Naive thymus-derived CD4-positive, alpha-beta T cell (primary cell): ENCODE measurements at regions of chr12 and their contacts with region 1.

Region 1: GRCh38 chr12:94459728-94460615 is at the start of gene CEP83:
- DNase-seq: peak; percentile 89 to 97 (median 94)
- ATAC-seq: peak; percentile 99
- H3K4me3 ChIP-seq: peak within 1 kb of the TSS; percentile 68
- H3K4me3 Mint-ChIP-seq: peak within 1 kb of the TSS; percentile 92 to 98 (median 96)
- H3K27ac ChIP-seq: peak within 1 kb of the TSS; percentile 91
- H3K27ac Mint-ChIP-seq: peak within 1 kb of the TSS; percentile 70 to 97 (median 94)
- H3K4me1 ChIP-seq: peaks cover 3 to 13% of the 10 kb centered on the region in 2 donors
- H3K4me1 Mint-ChIP-seq: peaks cover 10 to 38% (median 30%) of the 10 kb centered on the region in 7 donors
- H3K27me3 ChIP-seq: no peaks in the 10 kb centered on the region
- H3K27me3 Mint-ChIP-seq: peaks cover 0 to 12% (median 6%) of the 10 kb centered on the region in 5 donors
- total RNA-seq, gene CEP83: 12.8 to 22.7 (median 16.8) TPM

Region 2: GRCh38 chr12:92928962-92929915 is 1530.7 kb before region 1 on chr12 and contains the start of gene EEA1:
- CTCF ChIA-PET with region 1: no interaction called
- POLR2A ChIA-PET with region 1: no interaction called
- intact Hi-C with region 1: loop called in 1 of 2 experiments (anchors 1 kb)
- DNase-seq: peak; percentile 89 to 96 (median 91)
- ATAC-seq: peak; percentile 93
- H3K4me3 ChIP-seq: peak within 1 kb of the TSS; percentile 71
- H3K4me3 Mint-ChIP-seq: peak within 1 kb of the TSS; percentile 75 to 94 (median 91)
- H3K27ac ChIP-seq: peak within 1 kb of the TSS; percentile 96
- H3K27ac Mint-ChIP-seq: peak within 1 kb of the TSS; percentile 89 to 99 (median 93)
- H3K4me1 ChIP-seq: peaks cover 19 to 23% of the 10 kb centered on the region in 2 donors
- H3K4me1 Mint-ChIP-seq: peaks cover 20 to 53% (median 37%) of the 10 kb centered on the region in 7 donors
- H3K27me3 ChIP-seq: no peaks in the 10 kb centered on the region
- H3K27me3 Mint-ChIP-seq: peaks cover 0 to 6% (median 0%) of the 10 kb centered on the region in 5 donors
- total RNA-seq, gene EEA1: 20.9 to 28.3 (median 27.9) TPM

Region 3: DNA sequence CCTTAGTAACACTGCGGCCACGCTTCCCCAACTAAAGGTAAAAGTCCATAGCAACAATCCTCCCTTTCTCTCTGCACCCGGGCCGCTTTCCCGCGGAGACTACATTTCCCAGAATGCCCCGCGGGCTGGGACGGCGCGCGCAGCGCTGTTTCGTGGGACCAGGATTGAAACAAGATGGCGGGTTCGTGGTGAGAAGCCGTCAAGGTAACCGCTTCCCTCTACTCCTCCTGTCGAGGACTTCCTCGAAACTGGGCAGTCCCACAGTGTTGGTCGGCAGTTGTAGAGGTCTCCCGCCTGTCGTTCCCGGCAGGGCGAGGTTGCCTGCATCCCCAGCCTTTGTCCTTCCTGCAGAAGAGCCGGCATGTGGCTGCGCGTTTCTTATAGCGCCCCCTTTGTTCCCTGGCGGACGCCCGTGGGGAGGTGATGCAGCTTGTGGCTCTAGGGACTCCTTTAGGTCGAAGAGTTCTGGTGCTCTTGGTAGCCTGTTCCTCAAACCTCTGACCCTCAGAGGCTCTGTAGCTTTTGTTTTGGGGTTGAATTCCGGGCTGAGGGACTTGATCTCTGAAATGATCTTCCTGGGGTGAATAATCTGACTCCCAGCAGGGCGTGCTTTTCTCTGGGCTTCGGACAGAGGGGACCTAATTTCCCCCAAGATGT is 992.5 kb before region 1 on chr12 and contains the start of gene MRPL42:
- CTCF ChIA-PET with region 1: no interaction called
- POLR2A ChIA-PET with region 1: no interaction called
- intact Hi-C with region 1: loop called in 1 of 2 experiments (anchors 5 kb)
- DNase-seq: peak; percentile 86 to 96 (median 94)
- ATAC-seq: peak; percentile 97
- H3K4me3 ChIP-seq: peak within 1 kb of the TSS; percentile 94
- H3K4me3 Mint-ChIP-seq: peak within 1 kb of the TSS; percentile 85 to 96 (median 93)
- H3K27ac ChIP-seq: peak within 1 kb of the TSS; percentile 85
- H3K27ac Mint-ChIP-seq: peak within 1 kb of the TSS; percentile 90 to 98 (median 95)
- H3K4me1 ChIP-seq: peaks cover 8 to 10% of the 10 kb centered on the region in 2 donors
- H3K4me1 Mint-ChIP-seq: peaks cover 28 to 48% (median 36%) of the 10 kb centered on the region in 7 donors
- H3K27me3 ChIP-seq: no peaks in the 10 kb centered on the region
- H3K27me3 Mint-ChIP-seq: no peaks in the 10 kb centered on the region
- total RNA-seq, gene MRPL42: 30.1 to 65.8 (median 45.6) TPM

Region 4: GRCh38 chr12:93979189-93979588 is 480.8 kb before region 1 on chr12:
- CTCF ChIA-PET with region 1: no interaction called
- POLR2A ChIA-PET with region 1: no interaction called
- intact Hi-C with region 1: no loop called
- DNase-seq: peak in 4 of 9 donors; percentile 21 to 51 (median 31)
- ATAC-seq: peak; percentile 27
- H3K4me3 ChIP-seq: no peak overlapping the region
- H3K4me3 Mint-ChIP-seq: no peak overlapping the region
- H3K27ac ChIP-seq: no peak overlapping the region
- H3K27ac Mint-ChIP-seq: peak overlapping the region in 1 of 9 donors; percentile 27
- H3K4me1 ChIP-seq: no peaks in the 10 kb centered on the region
- H3K4me1 Mint-ChIP-seq: peaks cover 13 to 48% (median 30%) of the 10 kb centered on the region in 7 donors
- H3K27me3 ChIP-seq: no peaks in the 10 kb centered on the region
- H3K27me3 Mint-ChIP-seq: peaks cover 0 to 6% (median 0%) of the 10 kb centered on the region in 5 donors

Region 5: DNA sequence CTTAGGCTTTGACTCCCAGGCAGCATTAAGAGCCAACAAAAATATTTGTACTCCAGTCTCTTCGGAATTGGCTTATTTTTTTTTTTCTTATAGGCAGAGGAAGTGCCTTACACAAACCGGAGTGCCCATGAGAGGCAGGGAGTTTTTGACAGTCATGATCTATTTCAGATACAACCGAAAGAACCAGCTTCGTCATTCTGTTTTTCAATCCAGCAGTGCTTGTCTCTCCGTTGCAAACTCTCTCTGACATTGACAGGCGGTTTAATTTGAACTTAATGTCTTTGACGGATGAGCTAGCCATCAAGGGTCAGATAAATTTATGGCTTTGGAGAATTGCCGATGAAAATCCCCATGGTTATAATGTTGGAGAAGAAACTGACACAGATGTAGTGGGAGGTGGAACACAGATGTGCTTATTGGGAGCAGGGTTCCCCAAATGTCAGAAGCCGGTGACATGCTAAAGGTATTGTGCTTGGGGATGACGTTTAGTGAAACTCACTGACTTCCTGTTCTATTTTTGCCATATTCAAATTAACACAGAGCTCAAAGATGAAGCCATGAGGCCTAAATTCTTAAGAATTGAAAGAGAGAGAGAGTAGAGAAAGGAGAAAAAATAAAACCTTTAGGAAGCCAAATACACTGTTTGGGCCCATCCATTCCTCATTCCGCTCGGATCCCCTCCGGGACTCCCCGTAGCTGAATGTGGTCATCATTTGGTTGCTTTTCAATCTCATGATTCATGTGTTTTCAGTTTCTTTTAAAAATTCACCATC is 251.9 kb before region 1 on chr12:
- CTCF ChIA-PET with region 1: no interaction called
- POLR2A ChIA-PET with region 1: no interaction called
- intact Hi-C with region 1: loop called (anchors 1 kb)
- DNase-seq: peak in 8 of 9 donors; percentile 24 to 55 (median 48)
- ATAC-seq: peak; percentile 86
- H3K4me3 ChIP-seq: peak overlapping the region; percentile 58
- H3K4me3 Mint-ChIP-seq: peak overlapping the region; percentile 70 to 87 (median 82)
- H3K27ac ChIP-seq: peak overlapping the region; percentile 61
- H3K27ac Mint-ChIP-seq: peak overlapping the region; percentile 90 to 98 (median 94)
- H3K4me1 ChIP-seq: peaks cover 40 to 49% of the 10 kb centered on the region in 2 donors
- H3K4me1 Mint-ChIP-seq: peaks cover 36 to 58% (median 56%) of the 10 kb centered on the region in 7 donors
- H3K27me3 ChIP-seq: no peaks in the 10 kb centered on the region
- H3K27me3 Mint-ChIP-seq: no peaks in the 10 kb centered on the region

Region 6: GRCh38 chr12:94427501-94428381 is 32.2 kb before region 1 on chr12:
- CTCF ChIA-PET with region 1: no interaction called
- POLR2A ChIA-PET with region 1: no interaction called
- intact Hi-C with region 1: no loop called
- DNase-seq: no peak
- ATAC-seq: no peak
- H3K4me3 ChIP-seq: no peak overlapping the region
- H3K4me3 Mint-ChIP-seq: no peak overlapping the region
- H3K27ac ChIP-seq: no peak overlapping the region
- H3K27ac Mint-ChIP-seq: no peak overlapping the region
- H3K4me1 ChIP-seq: no peaks in the 10 kb centered on the region
- H3K4me1 Mint-ChIP-seq: peaks cover 0 to 11% (median 6%) of the 10 kb centered on the region in 7 donors
- H3K27me3 ChIP-seq: no peaks in the 10 kb centered on the region
- H3K27me3 Mint-ChIP-seq: no peaks in the 10 kb centered on the region

Region 7: DNA sequence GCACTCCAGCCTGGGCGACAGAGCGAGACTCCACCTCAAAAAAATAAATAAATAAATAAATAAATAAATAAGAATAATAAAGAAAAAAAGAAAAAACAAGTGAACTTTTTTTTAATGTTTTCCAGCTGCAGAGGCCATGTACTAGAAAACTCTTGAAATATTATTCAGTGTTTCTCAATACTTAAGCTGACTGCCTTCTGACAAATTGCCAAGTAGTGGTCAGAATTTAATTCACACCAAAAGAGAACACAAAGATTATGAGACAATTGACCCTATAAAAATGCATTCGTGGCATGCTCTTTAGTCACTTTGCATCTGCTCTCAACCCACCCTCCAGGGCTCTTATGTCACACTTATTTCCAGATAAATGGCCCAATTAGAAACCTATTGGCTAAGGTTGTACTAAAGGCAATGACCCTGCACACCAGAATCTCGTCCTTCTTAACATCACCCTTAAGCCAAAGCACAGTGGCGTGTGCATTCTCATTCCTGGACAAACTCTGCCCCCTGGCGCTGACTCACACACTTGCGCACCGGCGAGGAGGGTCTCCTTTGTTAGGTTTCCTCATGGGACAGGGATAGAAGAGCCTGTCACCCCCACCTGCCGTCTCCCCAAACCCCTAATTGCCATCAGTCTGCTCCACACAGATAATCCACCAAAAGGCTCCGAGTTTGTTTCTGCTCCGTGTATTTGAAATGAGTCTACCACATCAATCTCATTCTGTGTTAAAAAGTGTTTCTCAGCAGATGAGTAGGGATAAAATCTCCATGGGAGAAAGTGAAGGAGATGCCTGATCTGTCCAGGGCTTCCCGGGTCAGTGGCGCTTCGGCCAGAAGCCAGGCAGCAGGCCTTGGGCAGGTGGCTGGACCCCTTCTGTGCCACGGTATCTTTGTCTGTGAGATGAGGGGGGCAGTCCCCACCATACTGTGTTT is 72.8 kb after region 1 on chr12:
- CTCF ChIA-PET with region 1: no interaction called
- POLR2A ChIA-PET with region 1: no interaction called
- intact Hi-C with region 1: loop called (anchors 2 to 5 kb)
- DNase-seq: peak; percentile 20 to 68 (median 56)
- ATAC-seq: peak; percentile 80
- H3K4me3 ChIP-seq: no peak overlapping the region
- H3K4me3 Mint-ChIP-seq: no peak overlapping the region
- H3K27ac ChIP-seq: no peak overlapping the region
- H3K27ac Mint-ChIP-seq: no peak overlapping the region
- H3K4me1 ChIP-seq: no peaks in the 10 kb centered on the region
- H3K4me1 Mint-ChIP-seq: peaks cover 0 to 17% (median 3%) of the 10 kb centered on the region in 7 donors
- H3K27me3 ChIP-seq: no peaks in the 10 kb centered on the region
- H3K27me3 Mint-ChIP-seq: peaks cover 3 to 19% (median 8%) of the 10 kb centered on the region in 5 donors

Region 8: GRCh38 chr12:95072900-95073697 is 613.1 kb after region 1 on chr12 and contains the start of gene NR2C1:
- CTCF ChIA-PET with region 1: no interaction called
- POLR2A ChIA-PET with region 1: no interaction called
- intact Hi-C with region 1: loop called in 1 of 2 experiments (anchors 1 kb)
- DNase-seq: peak; percentile 76 to 95 (median 92)
- ATAC-seq: peak; percentile 98
- H3K4me3 ChIP-seq: peak within 1 kb of the TSS; percentile 81
- H3K4me3 Mint-ChIP-seq: peak within 1 kb of the TSS; percentile 92 to 98 (median 94)
- H3K27ac ChIP-seq: peak within 1 kb of the TSS; percentile 81
- H3K27ac Mint-ChIP-seq: peak within 1 kb of the TSS; percentile 84 to 96 (median 93)
- H3K4me1 ChIP-seq: peaks cover 0 to 9% of the 10 kb centered on the region in 2 donors
- H3K4me1 Mint-ChIP-seq: peaks cover 8 to 40% (median 30%) of the 10 kb centered on the region in 7 donors
- H3K27me3 ChIP-seq: no peaks in the 10 kb centered on the region
- H3K27me3 Mint-ChIP-seq: peaks cover 0 to 5% (median 0%) of the 10 kb centered on the region in 5 donors
- total RNA-seq, gene NR2C1: 30.5 to 66.8 (median 58.7) TPM

Region 9: DNA sequence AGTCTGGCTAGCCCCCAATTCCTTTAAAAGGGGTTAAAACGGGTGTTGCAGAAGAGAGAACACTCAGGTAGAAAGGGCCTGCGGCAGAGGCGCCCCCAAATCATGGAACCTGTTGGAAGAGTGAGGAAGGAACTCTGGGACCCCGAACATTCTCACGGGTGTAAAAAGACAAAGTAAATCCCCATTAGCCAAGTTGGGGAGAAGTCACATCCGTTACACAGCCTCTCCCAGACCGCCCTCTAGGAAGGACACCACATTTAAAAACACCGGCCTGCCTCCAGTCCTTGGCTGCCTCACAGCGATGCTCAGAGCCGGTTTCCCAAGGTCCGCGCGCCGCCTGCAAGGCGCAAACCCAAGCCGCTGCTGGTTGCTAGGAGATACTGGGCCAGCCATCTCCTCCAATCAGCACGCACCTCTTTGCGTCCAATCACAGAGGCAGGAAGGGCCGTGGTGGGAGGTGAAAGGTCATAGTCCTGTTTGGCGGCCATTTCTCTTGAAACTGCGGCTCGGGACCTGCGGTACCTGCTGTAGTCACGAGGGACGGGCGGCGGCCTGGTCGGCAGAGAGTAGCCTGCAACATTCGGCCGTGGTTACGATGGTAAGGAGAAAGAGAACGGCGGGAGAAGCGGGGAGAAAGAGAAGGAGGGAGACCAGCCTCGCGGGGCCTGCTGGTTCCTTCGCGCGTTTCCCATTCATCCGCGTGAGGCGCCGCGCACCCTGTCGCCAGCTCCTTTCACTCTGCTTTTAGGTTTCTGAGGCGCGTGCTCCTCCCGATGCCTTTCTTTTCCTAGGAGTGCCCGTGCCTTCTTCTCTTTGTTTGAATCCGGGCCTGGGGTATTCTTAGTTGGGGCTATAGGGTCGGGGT is 1398.7 kb after region 1 on chr12 and contains the start of gene SNRPF:
- CTCF ChIA-PET with region 1: no interaction called
- POLR2A ChIA-PET with region 1: no interaction called
- intact Hi-C with region 1: loop called in 1 of 2 experiments (anchors 5 kb)
- DNase-seq: peak; percentile 88 to 96 (median 92)
- ATAC-seq: peak; percentile 98
- H3K4me3 ChIP-seq: peak within 1 kb of the TSS; percentile 82
- H3K4me3 Mint-ChIP-seq: no peak within 1 kb of the TSS
- H3K27ac ChIP-seq: peak within 1 kb of the TSS; percentile 86
- H3K27ac Mint-ChIP-seq: no peak within 1 kb of the TSS
- H3K4me1 ChIP-seq: peaks cover 11 to 12% of the 10 kb centered on the region in 2 donors
- H3K4me1 Mint-ChIP-seq: peaks cover 13 to 27% (median 16%) of the 10 kb centered on the region in 7 donors
- H3K27me3 ChIP-seq: no peaks in the 10 kb centered on the region
- H3K27me3 Mint-ChIP-seq: peaks cover 3 to 11% (median 7%) of the 10 kb centered on the region in 5 donors
- total RNA-seq, gene SNRPF: 19.0 to 40.4 (median 21.7) TPM